MCF 10A (cell line): ENCODE measurements at regions of chr2 and their contacts with region 1.

Region 1: GRCh38 chr2:18520451-18521425 is 39.7 kb downstream of the RDH14 start:
- DNase-seq: peak; percentile 78
- H3K4me3 Mint-ChIP-seq: no peak overlapping the region
- H3K27ac Mint-ChIP-seq: no peak overlapping the region
- H3K4me1 Mint-ChIP-seq: no peaks in the 10 kb centered on the region
- H3K27me3 Mint-ChIP-seq: no peaks in the 10 kb centered on the region
- CTCF ChIP-seq: peak; percentile 95

Region 2: DNA sequence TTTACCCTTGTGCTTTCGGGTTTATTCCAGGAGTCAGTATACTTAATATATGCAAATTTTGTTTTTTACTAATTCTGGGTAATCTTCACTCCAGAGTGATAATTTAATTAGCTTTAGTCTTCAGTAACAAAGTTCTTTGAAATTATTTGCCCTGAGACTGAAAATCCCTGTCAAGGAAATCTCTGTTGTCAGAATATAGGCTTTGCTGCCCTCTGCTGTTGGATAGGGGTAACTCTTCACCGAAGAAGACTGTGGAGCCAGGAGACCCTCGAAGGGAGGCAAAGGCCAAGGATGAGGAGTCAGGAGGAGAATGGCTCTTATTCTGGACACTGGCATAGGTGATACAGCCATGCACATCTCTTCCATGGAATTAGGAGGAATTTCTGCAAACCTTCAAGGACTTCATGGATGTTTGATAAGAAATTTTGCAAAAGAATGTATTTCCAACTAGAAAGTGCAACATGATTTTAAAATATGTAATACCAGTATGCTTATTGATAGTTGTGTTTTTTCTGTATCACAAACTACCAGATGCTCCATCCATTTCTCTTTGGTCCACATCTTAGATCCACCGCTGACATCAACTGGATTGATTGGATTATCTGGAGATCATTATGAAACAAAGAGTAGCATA is 142.6 kb before region 1 on chr2:
- CTCF ChIA-PET with region 1: no interaction called
- POLR2A ChIA-PET with region 1: no interaction called
- intact Hi-C with region 1: no loop called
- DNase-seq: peak; percentile 66
- H3K4me3 Mint-ChIP-seq: no peak overlapping the region
- H3K27ac Mint-ChIP-seq: no peak overlapping the region
- H3K4me1 Mint-ChIP-seq: peaks cover 6% of the 10 kb centered on the region
- H3K27me3 Mint-ChIP-seq: peaks cover 13% of the 10 kb centered on the region
- CTCF ChIP-seq: peak; percentile 82

Region 3: GRCh38 chr2:18435421-18436037 is 85.2 kb before region 1 on chr2:
- CTCF ChIA-PET with region 1: interaction called, 6 read pairs
- POLR2A ChIA-PET with region 1: no interaction called
- intact Hi-C with region 1: loop called (anchors 2 kb)
- DNase-seq: peak; percentile 69
- H3K4me3 Mint-ChIP-seq: no peak overlapping the region
- H3K27ac Mint-ChIP-seq: no peak overlapping the region
- H3K4me1 Mint-ChIP-seq: no peaks in the 10 kb centered on the region
- H3K27me3 Mint-ChIP-seq: no peaks in the 10 kb centered on the region
- CTCF ChIP-seq: peak; percentile 63

Region 4: GRCh38 chr2:18536100-18536499 is 15.4 kb after region 1 on chr2:
- CTCF ChIA-PET with region 1: interaction called, 44 read pairs
- POLR2A ChIA-PET with region 1: no interaction called
- intact Hi-C with region 1: no loop called
- DNase-seq: peak; percentile 47
- H3K4me3 Mint-ChIP-seq: peak overlapping the region; percentile 12
- H3K27ac Mint-ChIP-seq: peak overlapping the region; percentile 81
- H3K4me1 Mint-ChIP-seq: peaks cover 12% of the 10 kb centered on the region
- H3K27me3 Mint-ChIP-seq: no peaks in the 10 kb centered on the region
- CTCF ChIP-seq: no peak

Region 5: DNA sequence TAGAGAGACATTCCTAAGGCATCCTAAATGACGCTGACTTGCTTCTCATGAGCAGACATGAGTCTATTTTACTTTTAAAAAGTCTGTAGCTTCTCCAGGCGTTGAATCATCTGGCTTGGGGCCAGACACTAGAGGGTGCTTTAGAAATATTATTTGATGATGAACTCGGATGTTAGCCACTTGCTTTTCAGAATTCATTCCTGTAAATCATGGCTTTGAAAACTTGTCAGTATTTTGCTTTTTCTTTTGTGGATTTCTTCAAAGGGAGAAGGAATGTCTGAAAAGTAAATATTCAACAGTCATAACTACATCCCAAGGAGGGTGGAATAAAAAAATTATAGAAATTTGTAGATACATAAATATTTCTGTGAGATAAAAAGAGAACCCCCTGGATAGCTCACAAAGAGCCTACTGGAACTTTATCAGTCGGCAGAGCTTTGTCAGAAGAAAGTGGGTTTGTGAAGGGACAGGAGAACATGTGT is 466.9 kb after region 1 on chr2:
- CTCF ChIA-PET with region 1: interaction called, 4 read pairs
- POLR2A ChIA-PET with region 1: no interaction called
- intact Hi-C with region 1: loop called (anchors 10 kb)
- DNase-seq: peak; percentile 94
- H3K4me3 Mint-ChIP-seq: no peak overlapping the region
- H3K27ac Mint-ChIP-seq: peak overlapping the region; percentile 27
- H3K4me1 Mint-ChIP-seq: peaks cover 17% of the 10 kb centered on the region
- H3K27me3 Mint-ChIP-seq: no peaks in the 10 kb centered on the region
- CTCF ChIP-seq: no peak

Region 6: DNA sequence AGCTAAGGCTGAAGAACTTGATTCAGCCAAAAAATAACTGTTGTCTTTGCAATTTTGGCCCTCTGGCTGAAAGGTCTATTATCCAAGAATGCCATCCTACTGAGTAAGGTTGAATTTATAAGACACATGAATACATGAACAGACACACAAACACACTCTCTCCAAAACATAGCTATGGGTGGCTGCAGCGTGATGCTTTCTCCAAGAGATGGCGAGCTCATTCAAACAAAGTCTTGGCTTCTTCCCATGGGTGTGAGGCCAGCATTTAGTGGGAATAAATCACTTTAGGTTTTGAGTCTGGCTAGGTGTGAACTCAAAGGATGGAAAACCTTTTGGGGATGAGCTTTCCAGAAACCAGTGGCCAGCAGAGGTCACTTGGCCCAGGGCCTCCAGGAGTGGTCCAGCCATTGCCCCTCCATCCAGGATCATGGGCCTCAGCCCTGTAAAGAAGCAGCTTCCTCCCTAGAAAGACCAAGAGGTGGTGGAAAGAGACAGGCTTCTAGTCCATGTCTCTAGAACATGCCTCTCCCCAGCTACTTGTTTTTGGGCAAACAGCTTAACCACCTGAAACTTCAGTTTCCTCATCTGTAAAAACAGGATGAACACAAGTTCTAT is 848.7 kb after region 1 on chr2:
- CTCF ChIA-PET with region 1: interaction called, 21 read pairs
- POLR2A ChIA-PET with region 1: no interaction called
- intact Hi-C with region 1: no loop called
- DNase-seq: peak; percentile 70
- H3K4me3 Mint-ChIP-seq: no peak overlapping the region
- H3K27ac Mint-ChIP-seq: no peak overlapping the region
- H3K4me1 Mint-ChIP-seq: no peaks in the 10 kb centered on the region
- H3K27me3 Mint-ChIP-seq: no peaks in the 10 kb centered on the region
- CTCF ChIP-seq: peak; percentile 71